SK-N-SH (cell line): ENCODE measurements at regions of chr9 and their contacts with region 1.

Region 1: DNA sequence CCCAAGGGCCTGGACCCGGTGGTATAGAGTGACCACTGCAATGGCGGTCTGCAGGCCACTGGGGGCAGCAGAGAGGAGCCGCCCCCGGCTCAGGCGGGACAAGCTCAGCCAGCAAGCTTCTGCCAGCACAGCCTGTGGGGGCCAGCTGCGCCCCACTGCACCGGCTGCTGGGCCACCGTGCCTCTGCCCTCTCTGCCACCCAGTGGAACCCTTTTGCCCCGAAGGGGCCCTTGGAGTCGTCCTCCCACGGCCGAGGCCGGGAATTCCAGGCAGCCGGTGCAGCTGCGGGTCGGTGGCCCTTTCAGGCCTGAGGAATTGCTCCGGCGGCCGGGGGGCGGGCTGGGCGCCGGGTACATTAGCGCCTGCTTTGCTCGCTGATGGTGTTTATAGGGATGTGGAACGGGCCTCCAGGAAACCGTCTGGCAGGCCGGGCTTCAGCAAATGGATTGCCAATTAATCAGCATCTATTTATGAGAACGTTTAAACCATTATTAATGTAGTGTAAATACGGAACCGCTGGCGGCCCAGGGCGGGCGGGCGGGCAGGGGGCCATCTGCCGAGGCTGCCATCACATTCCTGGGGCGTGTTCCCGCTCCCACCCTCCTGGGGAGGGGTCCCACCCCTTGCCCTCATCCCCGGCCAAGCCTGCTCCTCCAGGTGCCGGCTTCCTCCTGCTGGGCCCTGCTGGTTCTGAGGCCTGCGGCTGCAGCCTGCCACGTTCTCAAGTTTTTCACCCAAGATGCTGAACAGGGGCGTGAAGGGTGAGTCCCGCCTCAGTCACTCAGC is 127.4 kb downstream of the BARX1 start:
- DNase-seq: peak; percentile 96
- H3K4me3 ChIP-seq: peak overlapping the region; percentile 32 to 39; a peak in 3 of 4 replicates
- H3K27ac ChIP-seq: no peak overlapping the region
- H3K4me1 ChIP-seq: no peaks in the 10 kb centered on the region; a peak in 1 of 4 replicates
- H3K27me3 ChIP-seq: no peaks in the 10 kb centered on the region
- CTCF ChIP-seq: peak; percentile 64
- EP300 ChIP-seq: no peak
- RAD21 ChIP-seq: peak; percentile 49; the same call in 1 of the 2 replicates

Region 2: DNA sequence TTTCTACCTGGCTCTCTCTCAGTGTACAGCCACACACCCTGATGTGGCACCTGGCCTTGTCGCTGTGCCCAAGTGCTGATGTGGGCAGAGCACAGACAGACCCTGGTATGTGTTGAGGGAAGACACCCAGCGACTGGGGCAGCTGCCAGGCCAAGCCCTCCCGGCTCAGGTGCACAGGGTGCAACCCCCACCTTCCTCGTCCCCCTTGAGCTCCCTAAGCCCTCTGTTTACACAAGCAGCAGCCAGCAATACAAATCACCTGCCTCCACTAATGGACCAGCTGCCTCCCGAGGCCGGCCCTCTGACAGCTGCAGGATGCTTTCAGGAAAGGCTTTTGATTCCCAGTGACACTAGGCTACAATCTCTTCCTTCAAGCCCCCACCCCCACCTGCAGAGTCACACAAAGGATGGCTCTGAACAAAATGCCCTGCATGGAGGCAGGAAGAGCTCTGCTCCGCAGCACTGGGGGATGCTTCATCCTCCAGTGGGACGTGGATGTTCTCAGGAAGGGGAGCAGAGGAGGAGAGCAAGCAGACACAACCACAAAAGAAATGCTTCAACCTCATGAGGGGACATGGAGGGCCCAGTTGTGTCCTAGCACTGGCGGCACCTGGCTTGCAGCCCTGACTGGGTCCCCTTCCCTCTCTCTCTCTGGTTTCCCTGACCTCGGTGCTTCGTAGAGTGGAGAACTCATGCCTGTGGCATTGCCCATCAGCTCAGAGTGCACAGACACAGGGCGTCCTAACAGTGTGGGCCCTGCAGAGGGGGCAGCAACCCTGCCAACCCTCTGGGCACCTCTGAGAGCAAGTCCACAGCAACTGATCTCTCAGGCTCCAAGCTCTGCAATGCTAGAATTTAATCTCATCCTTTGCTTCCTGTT is 13.4 kb before region 1 on chr9:
- CTCF ChIA-PET with region 1: interaction called, 11 read pairs
- POLR2A ChIA-PET with region 1: no interaction called
- DNase-seq: peak; percentile 38
- H3K4me3 ChIP-seq: no peak overlapping the region
- H3K27ac ChIP-seq: no peak overlapping the region
- H3K4me1 ChIP-seq: no peaks in the 10 kb centered on the region
- H3K27me3 ChIP-seq: no peaks in the 10 kb centered on the region
- CTCF ChIP-seq: no peak
- EP300 ChIP-seq: no peak
- RAD21 ChIP-seq: peak; percentile 21; the same call in 1 of the 2 replicates